ENCODE measurements at regions of chr20 and their contacts with region 1.

Region 1: DNA sequence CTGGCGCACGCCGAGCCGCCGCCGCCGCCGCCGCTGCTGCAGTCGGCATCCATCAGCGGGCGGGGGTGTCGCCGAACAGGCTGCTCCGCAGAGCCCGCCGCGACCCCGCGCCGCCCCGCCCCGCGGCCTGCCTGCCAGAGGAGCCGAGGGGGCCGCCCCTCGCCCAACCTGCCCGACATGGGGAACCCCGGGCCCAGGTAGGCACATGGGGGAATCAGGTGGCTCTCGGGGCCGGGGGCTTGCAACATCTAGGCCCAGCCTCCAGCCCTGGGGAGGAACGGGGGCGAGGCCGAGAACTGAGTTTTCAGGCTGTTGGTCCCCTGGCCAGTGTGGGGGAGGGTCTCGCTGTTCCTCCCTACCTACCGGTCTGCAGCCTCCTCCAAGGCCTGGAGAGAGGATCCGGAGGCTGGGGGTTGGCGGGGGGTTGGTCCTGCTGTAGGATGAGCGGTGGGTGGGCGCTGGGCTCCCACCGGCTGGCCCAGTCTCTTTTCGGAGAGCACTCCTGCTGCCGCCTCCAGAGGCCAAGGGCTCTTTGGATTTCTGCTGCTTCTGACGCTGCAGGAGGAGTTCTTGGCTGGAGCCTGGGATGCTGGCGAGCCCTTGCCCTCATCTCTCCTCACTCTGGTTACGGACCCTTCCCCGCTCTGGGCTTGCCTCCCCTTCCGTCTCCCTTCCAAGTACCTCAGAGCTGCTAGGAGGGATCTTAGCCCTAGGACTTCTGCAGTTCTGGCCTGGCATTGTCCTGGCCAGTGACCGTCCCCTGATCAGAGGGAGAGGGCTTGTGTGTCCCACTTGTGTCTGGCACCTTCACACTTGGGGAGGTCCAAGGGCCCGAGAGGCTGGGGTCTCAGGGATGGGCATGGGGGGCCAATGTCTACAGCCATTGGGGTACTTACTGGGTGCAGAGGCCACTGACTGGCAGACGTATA is at the start of gene EPB41L1:
- DNase-seq: peak; percentile 57
- ATAC-seq: peak; percentile 49
- H3K4me3 Mint-ChIP-seq: peak within 1 kb of the TSS; percentile 78
- H3K27ac Mint-ChIP-seq: no peak within 1 kb of the TSS
- H3K4me1 Mint-ChIP-seq: peaks cover 23% of the 10 kb centered on the region
- H3K27me3 Mint-ChIP-seq: peaks cover 21% of the 10 kb centered on the region
- CTCF ChIP-seq: no peak
- total RNA-seq, gene EPB41L1: 37.7 to 38.7 TPM (median 38.1 TPM) in 3 replicates

Region 2: GRCh38 chr20:36128463-36129159 is 26.4 kb before region 1 on chr20:
- CTCF ChIA-PET with region 1: interaction called, 10 read pairs
- POLR2A ChIA-PET with region 1: no interaction called
- DNase-seq: no peak
- ATAC-seq: no peak
- H3K4me3 Mint-ChIP-seq: no peak overlapping the region
- H3K27ac Mint-ChIP-seq: no peak overlapping the region
- H3K4me1 Mint-ChIP-seq: 0 out of 2 replicates have a peak, but pooled peaks cover 7% of the 10 kb centered on the region
- H3K27me3 Mint-ChIP-seq: no peaks in the 10 kb centered on the region
- CTCF ChIP-seq: no peak

Region 3: DNA sequence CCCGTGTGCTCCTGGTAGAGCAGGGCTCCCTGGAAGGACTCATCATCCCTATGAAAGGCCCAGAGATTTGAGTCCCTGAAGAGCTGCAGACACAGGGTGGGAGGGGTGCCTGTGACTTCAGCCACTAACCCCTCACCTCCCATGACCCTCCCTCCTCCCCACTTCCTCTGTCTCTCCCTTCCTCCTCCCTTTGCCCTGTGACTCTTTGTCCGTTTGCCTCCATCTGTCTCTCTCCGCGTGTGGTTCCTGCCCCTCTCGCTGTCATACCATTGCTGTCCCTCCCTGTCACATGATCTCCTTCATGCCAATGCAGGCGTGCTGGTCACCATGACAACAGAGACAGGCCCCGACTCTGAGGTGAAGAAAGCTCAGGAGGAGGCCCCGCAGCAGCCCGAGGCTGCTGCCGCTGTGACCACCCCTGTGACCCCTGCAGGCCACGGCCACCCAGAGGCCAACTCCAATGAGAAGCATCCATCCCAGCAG is 18.5 kb after region 1 on chr20:
- CTCF ChIA-PET with region 1: interaction called, 32 read pairs
- POLR2A ChIA-PET with region 1: interaction called, 3 read pairs
- DNase-seq: peak; percentile 69
- ATAC-seq: peak; percentile 86
- H3K4me3 Mint-ChIP-seq: peak overlapping the region; percentile 14; the same call in 1 of the 2 replicates
- H3K27ac Mint-ChIP-seq: 0 out of 2 replicates have a peak overlapping the region, but pooled peaks have one; percentile 9
- H3K4me1 Mint-ChIP-seq: peaks cover 23% of the 10 kb centered on the region
- H3K27me3 Mint-ChIP-seq: no peaks in the 10 kb centered on the region
- CTCF ChIP-seq: no peak

Region 4: GRCh38 chr20:36193977-36194712 is 39.2 kb after region 1 on chr20:
- CTCF ChIA-PET with region 1: interaction called, 93 read pairs
- POLR2A ChIA-PET with region 1: no interaction called
- DNase-seq: no peak
- ATAC-seq: no peak
- H3K4me3 Mint-ChIP-seq: no peak overlapping the region
- H3K27ac Mint-ChIP-seq: no peak overlapping the region
- H3K4me1 Mint-ChIP-seq: no peaks in the 10 kb centered on the region
- H3K27me3 Mint-ChIP-seq: no peaks in the 10 kb centered on the region
- CTCF ChIP-seq: no peak

Region 5: GRCh38 chr20:36214684-36215256 is 59.8 kb after region 1 on chr20:
- CTCF ChIA-PET with region 1: interaction called, 10 read pairs
- POLR2A ChIA-PET with region 1: no interaction called
- DNase-seq: peak; percentile 43
- ATAC-seq: peak; percentile 77
- H3K4me3 Mint-ChIP-seq: no peak overlapping the region
- H3K27ac Mint-ChIP-seq: no peak overlapping the region
- H3K4me1 Mint-ChIP-seq: no peaks in the 10 kb centered on the region; the same call in 1 of the 2 replicates
- H3K27me3 Mint-ChIP-seq: no peaks in the 10 kb centered on the region
- CTCF ChIP-seq: peak; percentile 45; the same call in 1 of the 2 replicates